ENCODE measurements at regions of chr1 and their contacts with region 1.

Region 1: GRCh38 chr1:110619412-110620249 is 13.5 kb upstream of the KCNA2 start:
- DNase-seq: peak; percentile 60 to 82
- H3K4me3 ChIP-seq: no peak overlapping the region
- H3K27ac ChIP-seq: no peak overlapping the region
- H3K4me1 ChIP-seq: no peaks in the 10 kb centered on the region; the same call in 1 of the 2 replicates
- H3K27me3 ChIP-seq: peaks cover 40% of the 10 kb centered on the region; the same call in 1 of the 2 replicates
- CTCF ChIP-seq: peak; percentile 99

Region 2: DNA sequence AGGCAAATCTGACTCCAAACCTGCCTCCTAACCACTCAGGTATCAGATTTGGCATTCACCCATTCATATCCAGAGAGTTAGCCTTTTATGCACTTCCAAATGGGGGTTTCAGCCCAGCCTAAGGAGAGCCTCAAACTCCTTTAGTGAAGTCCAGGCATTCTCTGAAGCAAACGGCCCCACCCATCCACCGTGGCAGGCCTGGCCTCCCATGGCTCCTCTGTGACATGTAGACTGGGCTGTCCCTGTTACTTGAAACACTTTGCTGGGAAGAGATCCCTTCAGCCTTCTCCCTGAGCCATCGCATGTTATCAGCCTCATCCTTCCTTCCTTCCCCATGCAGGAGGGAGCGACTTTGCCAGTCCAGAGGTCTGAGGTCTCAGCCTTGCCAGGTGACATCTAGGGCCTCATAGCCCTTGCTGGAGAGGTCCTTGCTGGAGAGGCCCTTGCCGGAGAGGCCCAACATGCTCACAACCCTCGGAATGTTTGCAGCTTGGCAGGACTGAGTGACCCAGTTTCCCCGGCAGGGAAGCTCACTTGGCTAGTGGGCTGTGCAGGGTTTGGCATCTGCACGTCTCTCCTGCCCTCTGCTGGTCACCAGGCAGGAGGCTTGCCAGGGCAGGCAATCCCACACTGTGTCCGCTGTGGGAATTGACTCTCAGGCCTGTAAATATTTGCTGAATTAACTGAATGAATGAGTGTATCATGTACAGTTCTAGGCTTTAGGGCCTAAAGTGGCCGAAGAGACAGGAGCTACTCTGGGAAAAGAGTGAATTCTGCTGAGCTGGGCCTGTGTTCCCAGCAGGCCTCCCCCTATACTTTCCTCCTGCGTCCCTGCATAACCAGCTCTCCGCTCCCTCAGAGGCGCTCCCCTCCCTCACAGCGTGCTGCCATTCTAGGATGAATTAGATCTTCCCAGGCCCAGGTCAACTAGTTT is 307.2 kb before region 1 on chr1:
- CTCF ChIA-PET with region 1: no interaction called
- POLR2A ChIA-PET with region 1: no interaction called
- intact Hi-C with region 1: loop called (anchors 2 kb)
- DNase-seq: peak; percentile 72 to 74
- H3K4me3 ChIP-seq: no peak overlapping the region
- H3K27ac ChIP-seq: no peak overlapping the region
- H3K4me1 ChIP-seq: no peaks in the 10 kb centered on the region
- H3K27me3 ChIP-seq: no peaks in the 10 kb centered on the region
- CTCF ChIP-seq: peak; percentile 99

Region 3: GRCh38 chr1:110412576-110412975 is 207.1 kb before region 1 on chr1:
- CTCF ChIA-PET with region 1: no interaction called
- POLR2A ChIA-PET with region 1: no interaction called
- intact Hi-C with region 1: loop called (anchors 5 kb)
- DNase-seq: peak; percentile 60 to 74
- H3K4me3 ChIP-seq: no peak overlapping the region
- H3K27ac ChIP-seq: no peak overlapping the region
- H3K4me1 ChIP-seq: peaks cover 9% of the 10 kb centered on the region
- H3K27me3 ChIP-seq: no peaks in the 10 kb centered on the region
- CTCF ChIP-seq: peak; percentile 96

Region 4: DNA sequence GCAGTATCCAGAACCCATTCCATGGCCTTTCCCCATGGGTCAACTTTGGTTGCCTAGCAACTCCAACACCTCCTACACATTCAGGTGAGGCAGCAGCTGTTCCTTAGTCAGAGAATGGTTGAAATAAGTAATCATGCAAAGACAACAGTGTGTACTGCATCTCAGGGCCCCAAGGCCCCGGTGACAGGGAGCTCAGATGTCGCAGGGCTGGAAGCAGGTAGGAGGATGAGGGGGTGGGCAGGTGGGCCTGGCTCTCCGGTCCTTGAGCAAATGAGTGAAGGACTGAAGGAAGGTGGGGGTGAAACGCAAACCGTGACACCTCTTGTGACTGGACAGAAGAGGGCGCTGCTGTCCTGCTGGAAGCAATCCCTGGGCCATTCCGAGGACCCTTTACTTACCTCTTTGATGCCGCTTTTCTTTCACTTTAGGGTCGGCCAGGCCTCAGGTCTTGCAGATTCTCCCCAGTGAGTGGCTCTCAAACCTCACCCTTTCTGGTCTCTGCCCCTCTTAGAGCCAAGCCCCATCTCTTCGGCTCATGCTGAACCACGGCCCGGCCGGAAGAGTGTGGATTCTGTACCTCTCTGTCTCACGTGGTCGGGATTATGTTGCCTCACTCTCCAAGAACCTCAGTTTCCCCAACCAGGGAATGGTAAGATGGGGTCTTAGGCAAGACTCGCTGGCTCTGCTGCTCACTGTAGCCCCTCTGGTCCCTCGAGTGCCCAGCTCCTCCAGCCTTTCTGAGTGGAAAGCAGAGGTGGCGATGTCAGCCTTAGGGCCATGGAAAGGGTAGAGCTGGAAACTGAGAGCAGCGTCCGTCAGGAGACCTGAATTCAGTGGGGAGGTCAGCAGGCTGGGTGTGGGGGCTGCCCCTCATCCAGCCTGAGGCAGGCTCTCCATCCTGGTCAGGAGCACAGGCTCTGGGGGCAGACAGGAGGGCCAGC is 95.0 kb before region 1 on chr1:
- CTCF ChIA-PET with region 1: no interaction called
- POLR2A ChIA-PET with region 1: no interaction called
- intact Hi-C with region 1: loop called (anchors 1 kb)
- DNase-seq: peak in 1 of 2 experiments; percentile 27
- H3K4me3 ChIP-seq: no peak overlapping the region
- H3K27ac ChIP-seq: no peak overlapping the region
- H3K4me1 ChIP-seq: 0 out of 2 replicates have a peak, but pooled peaks cover 8% of the 10 kb centered on the region
- H3K27me3 ChIP-seq: peaks cover 96% of the 10 kb centered on the region
- CTCF ChIP-seq: peak; percentile 91

Region 5: DNA sequence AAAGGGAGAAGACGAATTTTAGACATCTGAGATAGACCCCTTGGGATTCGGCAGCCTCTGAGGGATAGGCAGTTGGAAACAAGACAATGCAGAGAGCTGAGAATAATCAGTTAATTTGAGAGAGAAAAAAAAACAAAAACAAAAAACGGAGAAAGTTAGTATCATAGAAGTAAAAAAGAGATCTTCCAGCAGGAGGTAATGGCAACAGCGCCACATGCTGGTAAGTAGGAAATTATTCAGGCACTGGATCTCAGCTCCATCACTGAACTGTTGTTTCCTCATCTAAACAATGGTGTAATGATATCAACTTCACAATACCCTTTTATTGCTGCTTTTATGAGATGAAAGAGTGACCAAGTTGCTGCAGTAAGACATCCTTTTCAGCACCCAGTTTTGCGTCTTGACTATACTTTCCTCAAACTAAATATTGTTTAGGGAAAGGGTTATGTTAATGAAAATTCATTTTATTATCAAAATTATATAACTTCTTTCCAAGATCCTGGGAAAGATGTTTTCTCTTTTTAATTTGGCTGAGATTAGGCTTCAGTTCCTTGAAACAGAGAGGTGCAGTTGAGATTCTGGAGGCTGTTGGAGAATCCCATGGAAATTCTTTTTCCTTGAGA is 146.5 kb after region 1 on chr1:
- CTCF ChIA-PET with region 1: interaction called, 15 read pairs
- POLR2A ChIA-PET with region 1: no interaction called
- intact Hi-C with region 1: loop called (anchors 2 kb)
- DNase-seq: no peak
- H3K4me3 ChIP-seq: no peak overlapping the region
- H3K27ac ChIP-seq: no peak overlapping the region
- H3K4me1 ChIP-seq: peaks cover 14% of the 10 kb centered on the region
- H3K27me3 ChIP-seq: peaks cover 15% of the 10 kb centered on the region
- CTCF ChIP-seq: peak; percentile 90

Region 6: GRCh38 chr1:110990536-110990935 is 370.9 kb after region 1 on chr1:
- CTCF ChIA-PET with region 1: no interaction called
- POLR2A ChIA-PET with region 1: no interaction called
- intact Hi-C with region 1: loop called (anchors 1 kb)
- DNase-seq: no peak
- H3K4me3 ChIP-seq: no peak overlapping the region
- H3K27ac ChIP-seq: no peak overlapping the region
- H3K4me1 ChIP-seq: no peaks in the 10 kb centered on the region
- H3K27me3 ChIP-seq: peaks cover 19% of the 10 kb centered on the region
- CTCF ChIP-seq: no peak

Measured in PC-9 (cell line).